ENCODE measurements at regions of chr17 and their contacts with region 1.

Region 1: GRCh38 chr17:3913531-3914311 is 2.5 kb downstream of the P2RX1 start:
- H3K4me3 ChIP-seq: no peak overlapping the region
- H3K27ac ChIP-seq: no peak overlapping the region
- H3K4me1 ChIP-seq: peaks cover 2% of the 10 kb centered on the region; the same call in 1 of the 2 replicates
- CTCF ChIP-seq: peak; percentile 90

Region 2: DNA sequence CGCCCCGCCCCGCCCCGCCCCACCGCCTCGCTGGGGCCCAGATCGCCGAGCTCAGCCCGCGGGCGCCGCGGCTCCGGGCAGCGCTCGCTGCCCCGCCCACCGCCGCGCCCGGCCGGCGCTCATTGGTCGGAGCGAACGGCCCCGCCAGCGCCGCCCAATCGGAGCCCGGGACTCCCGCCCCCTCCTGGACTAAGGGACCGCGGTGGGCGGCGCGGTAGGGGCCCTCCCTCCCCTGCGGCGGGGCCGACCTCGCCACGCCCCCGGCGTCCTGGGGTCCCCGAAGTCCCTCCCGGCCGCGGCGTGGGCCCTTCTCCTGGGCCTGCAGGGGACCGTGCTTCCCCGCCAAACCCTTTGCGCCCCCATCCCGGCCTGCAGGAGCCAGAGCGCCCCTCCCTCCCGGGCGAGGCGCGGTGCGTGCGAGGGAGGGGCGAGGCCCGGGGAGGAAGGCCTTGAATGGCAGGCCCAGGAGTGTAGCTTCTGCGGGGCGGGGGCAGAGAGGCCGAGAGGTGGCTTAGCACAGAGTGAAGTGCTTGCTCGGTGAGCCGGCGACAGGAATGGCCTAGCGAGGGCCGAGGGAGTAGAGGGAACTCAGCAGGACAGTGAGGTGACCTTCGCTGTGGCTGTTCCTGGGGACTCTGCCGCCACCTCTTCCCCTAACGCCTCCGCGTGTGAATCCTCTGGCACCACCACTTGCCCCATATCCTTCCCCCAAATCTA is 20.6 kb before region 1 on chr17 and contains the start of gene CAMKK1:
- CTCF ChIA-PET with region 1: interaction called, 20 read pairs
- POLR2A ChIA-PET with region 1: interaction called, 6 read pairs
- H3K4me3 ChIP-seq: peak within 1 kb of the TSS; percentile 56
- H3K27ac ChIP-seq: peak within 1 kb of the TSS; percentile 90
- H3K4me1 ChIP-seq: peaks cover 38% of the 10 kb centered on the region
- CTCF ChIP-seq: peak; percentile 30; the same call in 1 of the 2 replicates

Region 3: GRCh38 chr17:3927628-3928340 is 14.1 kb after region 1 on chr17:
- CTCF ChIA-PET with region 1: interaction called, 35 read pairs
- POLR2A ChIA-PET with region 1: no interaction called
- H3K4me3 ChIP-seq: no peak overlapping the region
- H3K27ac ChIP-seq: no peak overlapping the region
- H3K4me1 ChIP-seq: no peaks in the 10 kb centered on the region
- CTCF ChIP-seq: no peak

Region 4: DNA sequence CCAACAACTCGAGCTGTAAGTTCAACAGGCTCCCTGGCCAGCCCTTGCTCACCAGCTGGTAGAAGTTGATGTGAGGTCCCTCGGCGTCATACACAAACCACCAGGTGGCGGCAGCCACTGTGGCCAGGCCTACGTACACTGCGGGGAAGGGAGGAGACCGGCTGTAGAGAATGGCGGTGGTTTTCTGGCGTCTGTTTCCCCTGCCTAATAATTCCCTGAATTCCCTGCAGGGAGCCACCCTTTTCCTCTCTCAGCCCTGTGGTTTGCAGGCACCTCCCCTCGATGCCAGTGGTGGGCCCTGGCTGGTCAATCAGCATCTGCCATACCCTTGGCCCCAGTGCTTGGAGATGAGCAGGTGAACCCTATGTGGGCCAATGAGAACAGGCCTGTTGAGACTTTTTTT is 21.4 kb after region 1 on chr17:
- CTCF ChIA-PET with region 1: interaction called, 17 read pairs
- POLR2A ChIA-PET with region 1: no interaction called
- H3K4me3 ChIP-seq: no peak overlapping the region
- H3K27ac ChIP-seq: no peak overlapping the region
- H3K4me1 ChIP-seq: no peaks in the 10 kb centered on the region
- CTCF ChIP-seq: peak; percentile 83

Region 5: DNA sequence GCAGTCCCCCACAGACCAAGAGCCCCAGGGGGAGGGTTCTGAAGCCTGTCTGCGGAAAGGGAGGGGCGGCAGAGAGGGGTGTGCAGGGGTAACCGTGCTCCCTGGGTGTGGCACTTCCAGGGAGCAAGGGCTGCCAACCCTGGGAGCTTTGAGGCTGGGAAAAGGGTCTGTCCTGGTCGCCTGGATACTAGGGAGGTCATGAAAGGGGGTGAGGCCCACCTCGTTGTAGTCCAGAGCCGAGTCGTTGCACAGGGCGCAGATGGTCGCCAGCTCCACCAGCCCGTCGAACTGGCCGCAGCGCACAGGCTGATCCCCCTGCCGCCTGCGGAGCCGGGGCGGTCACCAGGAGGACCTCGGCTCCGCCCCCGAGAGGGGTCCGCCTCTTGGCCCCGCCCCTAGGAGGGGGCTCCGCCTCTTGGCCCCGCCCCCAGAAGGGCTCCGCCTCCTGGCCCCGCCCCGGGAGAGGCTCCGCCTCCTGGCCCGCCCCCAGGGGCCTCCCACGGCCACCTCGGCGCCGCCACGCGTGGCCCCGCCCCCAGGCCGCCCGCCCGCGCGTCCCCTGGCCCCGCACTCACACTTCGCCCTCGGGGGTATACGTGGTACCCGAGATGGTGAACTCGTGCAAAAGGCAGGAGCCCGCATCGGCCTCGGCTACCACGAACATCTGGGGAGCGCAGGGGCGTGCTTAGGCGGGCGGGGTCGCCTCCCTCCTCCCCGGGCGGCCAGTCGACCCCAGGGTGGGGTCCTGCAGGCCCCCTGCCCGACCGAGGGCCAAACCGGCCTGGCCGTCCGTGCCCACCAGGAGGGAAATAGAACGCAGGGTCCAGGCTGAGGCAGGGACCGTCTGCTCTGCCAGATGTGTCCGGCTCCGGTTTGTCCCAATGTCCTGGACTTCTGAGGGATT is 31.0 kb after region 1 on chr17:
- CTCF ChIA-PET with region 1: interaction called, 31 read pairs
- POLR2A ChIA-PET with region 1: no interaction called
- H3K4me3 ChIP-seq: peak overlapping the region; percentile 33
- H3K27ac ChIP-seq: peak overlapping the region; percentile 41; the same call in 1 of the 2 replicates
- H3K4me1 ChIP-seq: peaks cover 3% of the 10 kb centered on the region; the same call in 1 of the 2 replicates
- CTCF ChIP-seq: no peak

Region 6: GRCh38 chr17:4004517-4005295 is 91.0 kb after region 1 on chr17:
- CTCF ChIA-PET with region 1: interaction called, 124 read pairs
- POLR2A ChIA-PET with region 1: no interaction called
- H3K4me3 ChIP-seq: no peak overlapping the region
- H3K27ac ChIP-seq: no peak overlapping the region
- H3K4me1 ChIP-seq: no peaks in the 10 kb centered on the region
- CTCF ChIP-seq: peak; percentile 88

Region 7: GRCh38 chr17:4074831-4075495 is 161.2 kb after region 1 on chr17:
- CTCF ChIA-PET with region 1: interaction called, 33 read pairs
- POLR2A ChIA-PET with region 1: no interaction called
- H3K4me3 ChIP-seq: no peak overlapping the region
- H3K27ac ChIP-seq: no peak overlapping the region
- H3K4me1 ChIP-seq: no peaks in the 10 kb centered on the region
- CTCF ChIP-seq: 0 out of 2 replicates have a peak, but pooled peaks have one; percentile 38